ENCODE measurements at regions of chr2 and their contacts with region 1.

Region 1: GRCh38 chr2:102355526-102356380 is at the start of gene IL18R1:
- DNase-seq: peak; percentile 53
- ATAC-seq: peak; percentile 100
- H3K4me3 ChIP-seq: peak within 1 kb of the TSS; percentile 55 to 77 (median 70)
- H3K27ac ChIP-seq: no peak within 1 kb of the TSS
- H3K4me1 ChIP-seq: no peaks in the 10 kb centered on the region; the same call in 1 of the 2 replicates
- H3K27me3 ChIP-seq: peaks cover 2 to 18% of the 10 kb centered on the region in 2 experiments; a peak in 4 of 5 replicates
- CTCF ChIP-seq: peak; percentile 90
- EP300 ChIP-seq: no peak
- POLR2A ChIP-seq: no peak
- RAD21 ChIP-seq: peak; percentile 94
- total RNA-seq, gene IL18R1: 0.04 TPM in 1 of 2 replicates, not detected in the other

Region 2: GRCh38 chr2:102251042-102251848 is 104.5 kb before region 1 on chr2:
- CTCF ChIA-PET with region 1: interaction called, 5 read pairs
- POLR2A ChIA-PET with region 1: no interaction called
- in situ Hi-C with region 1: loop called (anchors 5 kb)
- intact Hi-C with region 1: loop called (anchors 2 kb)
- DNase-seq: peak; percentile 38
- ATAC-seq: peak; percentile 95
- H3K4me3 ChIP-seq: peak overlapping the region; percentile 15 to 76 (median 61)
- H3K27ac ChIP-seq: no peak overlapping the region
- H3K4me1 ChIP-seq: peaks cover 7% of the 10 kb centered on the region
- H3K27me3 ChIP-seq: peaks cover 2 to 47% of the 10 kb centered on the region in 2 experiments; a peak in 4 of 5 replicates
- CTCF ChIP-seq: peak; percentile 85
- EP300 ChIP-seq: peak in 1 of 2 experiments; percentile 17; a peak in 1 of 4 replicates
- POLR2A ChIP-seq: no peak
- RAD21 ChIP-seq: no peak